Caco-2 (cell line): ENCODE measurements at regions of chr16 and their contacts with region 1.

Region 1: GRCh38 chr16:4624015-4624826 is at the start of gene MGRN1:
- DNase-seq: peak; percentile 95
- H3K4me3 ChIP-seq: peak within 1 kb of the TSS; percentile 99
- H3K4me3 Mint-ChIP-seq: peak within 1 kb of the TSS; percentile 84
- H3K27ac Mint-ChIP-seq: peak within 1 kb of the TSS; percentile 99
- H3K4me1 ChIP-seq: peaks cover 6% of the 10 kb centered on the region; the same call in 1 of the 2 replicates
- H3K4me1 Mint-ChIP-seq: peaks cover 8% of the 10 kb centered on the region
- H3K27me3 ChIP-seq: no peaks in the 10 kb centered on the region
- H3K27me3 Mint-ChIP-seq: no peaks in the 10 kb centered on the region
- CTCF ChIP-seq: peak; percentile 84 to 94
- total RNA-seq, gene MGRN1: 67.1 and 72.3 TPM in 2 replicates

Region 2: GRCh38 chr16:4654011-4654963 is 30.1 kb after region 1 on chr16:
- CTCF ChIA-PET with region 1: interaction called, 4 read pairs
- POLR2A ChIA-PET with region 1: no interaction called
- intact Hi-C with region 1: loop called (anchors 2 kb)
- DNase-seq: peak; percentile 53 to 78
- H3K4me3 ChIP-seq: no peak overlapping the region
- H3K4me3 Mint-ChIP-seq: peak overlapping the region; percentile 43
- H3K27ac Mint-ChIP-seq: peak overlapping the region; percentile 86
- H3K4me1 ChIP-seq: peaks cover 29% of the 10 kb centered on the region
- H3K4me1 Mint-ChIP-seq: peaks cover 11% of the 10 kb centered on the region
- H3K27me3 ChIP-seq: no peaks in the 10 kb centered on the region
- H3K27me3 Mint-ChIP-seq: no peaks in the 10 kb centered on the region
- CTCF ChIP-seq: no peak